ENCODE measurements at regions of chr20 and their contacts with region 1.

Region 1: DNA sequence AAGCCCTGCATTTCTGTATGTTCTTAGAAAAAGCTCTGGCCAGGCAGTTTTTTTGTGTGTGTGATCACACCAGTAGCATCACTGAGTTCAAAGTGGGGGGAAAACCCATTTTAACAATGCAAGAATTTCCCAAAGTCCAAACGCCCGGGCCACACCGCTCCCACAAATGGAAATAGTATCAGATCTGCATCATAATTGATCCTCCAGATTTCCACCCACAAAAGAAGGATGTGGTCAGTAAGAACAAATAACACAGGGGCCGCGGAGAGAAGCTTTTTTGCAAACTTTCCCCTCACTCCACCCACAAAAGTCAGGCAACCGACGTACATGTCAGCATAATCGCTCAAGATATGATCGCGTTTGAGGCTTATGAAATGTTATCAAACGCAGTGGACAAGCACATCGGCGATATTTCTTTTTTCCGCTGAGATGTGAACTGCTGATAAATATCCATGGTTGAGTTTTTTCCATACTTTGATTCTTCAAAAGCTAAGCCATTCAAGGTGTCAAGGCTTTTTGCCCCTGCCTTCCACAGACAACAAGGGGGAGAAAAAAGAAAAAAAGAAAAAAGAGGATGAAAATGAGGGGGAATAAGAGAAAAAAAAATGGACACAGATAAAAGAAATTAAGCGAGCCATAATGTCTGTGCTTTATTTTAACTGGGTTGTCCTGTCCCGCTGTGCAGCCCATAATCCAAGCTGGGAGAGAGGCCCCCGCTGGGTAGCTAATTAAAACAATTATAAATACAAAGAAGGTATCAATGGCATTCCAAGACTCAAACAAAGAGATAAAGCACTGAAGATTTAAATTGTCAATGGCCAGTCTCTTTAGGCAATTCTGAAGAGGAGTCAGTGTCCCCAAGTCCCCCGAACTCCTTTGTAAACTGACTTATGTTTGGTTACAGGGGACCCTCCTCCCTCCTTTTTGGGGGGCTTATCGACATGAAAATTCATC is 143.5 kb downstream of the ZFP64 start:
- DNase-seq: peak; percentile 24
- H3K4me3 Mint-ChIP-seq: peak overlapping the region; percentile 44
- H3K27ac Mint-ChIP-seq: peak overlapping the region; percentile 89
- H3K4me1 Mint-ChIP-seq: peaks cover 35% of the 10 kb centered on the region
- H3K27me3 Mint-ChIP-seq: peaks cover 3% of the 10 kb centered on the region

Region 2: GRCh38 chr20:51631011-51631950 is 416.8 kb before region 1 on chr20:
- intact Hi-C with region 1: loop called (anchors 5 kb)
- DNase-seq: peak; percentile 35
- H3K4me3 Mint-ChIP-seq: peak overlapping the region; percentile 18
- H3K27ac Mint-ChIP-seq: peak overlapping the region; percentile 82
- H3K4me1 Mint-ChIP-seq: peaks cover 58% of the 10 kb centered on the region
- H3K27me3 Mint-ChIP-seq: peaks cover 13% of the 10 kb centered on the region

Region 3: DNA sequence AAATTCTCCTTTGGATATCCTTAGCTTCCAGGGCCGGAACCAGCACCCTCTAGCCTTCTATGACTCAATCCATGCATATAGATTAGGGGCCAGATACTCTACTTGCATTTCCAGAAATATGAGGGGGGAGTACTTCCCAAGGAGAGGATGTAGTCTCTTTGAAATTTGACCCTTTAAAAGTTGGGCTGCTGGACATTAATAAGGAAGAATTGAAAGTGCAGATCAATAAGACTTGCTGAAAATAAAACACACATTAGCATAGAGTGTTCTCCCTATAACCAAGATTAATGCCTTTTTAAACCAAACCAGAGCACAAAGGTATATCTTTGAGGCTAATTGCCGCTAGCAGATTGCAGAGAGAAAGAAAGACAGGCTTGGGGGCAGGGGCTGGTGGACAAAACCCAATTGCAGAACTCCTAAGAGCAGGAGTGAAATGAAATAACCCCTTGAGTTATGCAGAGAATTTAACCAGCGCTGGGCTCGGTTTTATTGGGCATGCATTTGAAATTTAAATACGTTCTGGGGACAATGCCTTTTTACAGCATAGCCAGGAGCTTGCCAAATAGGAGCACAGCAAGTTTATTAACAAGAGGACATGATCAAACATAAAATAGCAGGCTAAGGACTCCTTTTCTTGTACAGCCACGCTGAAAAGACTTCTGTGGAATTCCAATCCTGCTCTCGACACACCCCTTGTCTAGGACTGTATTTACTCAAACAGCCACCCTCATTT is 137.6 kb before region 1 on chr20:
- intact Hi-C with region 1: no loop called
- DNase-seq: no peak
- H3K4me3 Mint-ChIP-seq: no peak overlapping the region
- H3K27ac Mint-ChIP-seq: no peak overlapping the region
- H3K4me1 Mint-ChIP-seq: no peaks in the 10 kb centered on the region
- H3K27me3 Mint-ChIP-seq: peaks cover 10% of the 10 kb centered on the region

Region 4: DNA sequence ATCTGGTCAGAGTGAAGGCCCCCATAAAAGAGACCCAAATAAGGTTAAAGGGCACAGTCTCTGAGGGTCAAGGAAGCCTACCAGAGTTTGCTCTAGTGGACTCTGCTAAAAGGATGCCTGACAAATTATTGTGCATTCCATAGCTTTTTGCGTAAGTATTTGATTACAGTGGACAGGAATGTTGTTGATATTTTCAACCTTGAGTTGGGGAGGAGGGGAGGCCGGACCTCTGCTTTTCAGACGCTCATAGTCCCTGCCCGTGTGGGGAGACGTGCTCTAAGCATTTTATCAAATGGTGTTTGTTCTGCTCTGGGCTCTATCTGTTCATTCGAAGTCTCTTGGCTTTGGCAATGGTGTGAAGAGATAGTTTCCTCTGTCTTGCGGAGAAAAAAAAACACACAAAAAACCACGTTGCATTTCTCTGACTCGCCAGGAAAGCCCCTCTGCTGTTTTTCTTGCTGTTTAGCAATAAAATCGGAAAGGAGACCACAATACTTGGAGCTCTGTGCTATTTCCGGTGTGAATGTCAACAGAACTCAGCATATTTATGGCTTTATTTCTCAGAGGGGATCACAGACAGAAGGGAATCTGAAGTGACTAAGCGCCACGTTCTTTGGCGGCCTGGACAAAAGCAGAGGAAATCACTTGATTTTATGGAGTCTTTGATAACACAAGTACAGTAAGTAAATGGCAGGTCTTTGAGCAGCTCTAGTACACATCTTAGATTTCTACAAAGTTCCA is 16.4 kb before region 1 on chr20:
- intact Hi-C with region 1: loop called (anchors 2 kb)
- DNase-seq: no peak
- H3K4me3 Mint-ChIP-seq: no peak overlapping the region
- H3K27ac Mint-ChIP-seq: peak overlapping the region; percentile 64
- H3K4me1 Mint-ChIP-seq: peaks cover 12% of the 10 kb centered on the region
- H3K27me3 Mint-ChIP-seq: no peaks in the 10 kb centered on the region

Measured in activated T-helper 2 cell treated with anti-CD3 and anti-CD28 coated beads, Interferon-gamma antibody, Interleukin-2, Interleukin-4, amounts not matched to agents 10 μg/mL and 5 μg/mL and 100 μg/mL, durations not matched to agents 14 hours and 24 hours and 36 hours (primary cell).